ENCODE measurements at regions of chr9 and their contacts with region 1.

Region 1: GRCh38 chr9:68577774-68578591 is 37.3 kb upstream of the TMEM252 start:
- DNase-seq: peak; percentile 43
- ATAC-seq: peak; percentile 92
- H3K4me3 ChIP-seq: peak overlapping the region in 1 of 5 experiments; percentile 24
- H3K4me3 Mint-ChIP-seq: peak overlapping the region; percentile 40
- H3K27ac ChIP-seq: no peak overlapping the region
- H3K27ac Mint-ChIP-seq: no peak overlapping the region
- H3K4me1 ChIP-seq: peaks cover 25% of the 10 kb centered on the region in 2 donors
- H3K4me1 Mint-ChIP-seq: peaks cover 29% of the 10 kb centered on the region
- H3K27me3 ChIP-seq: no peaks in the 10 kb centered on the region
- H3K27me3 Mint-ChIP-seq: no peaks in the 10 kb centered on the region
- CTCF ChIP-seq: no peak

Region 2: DNA sequence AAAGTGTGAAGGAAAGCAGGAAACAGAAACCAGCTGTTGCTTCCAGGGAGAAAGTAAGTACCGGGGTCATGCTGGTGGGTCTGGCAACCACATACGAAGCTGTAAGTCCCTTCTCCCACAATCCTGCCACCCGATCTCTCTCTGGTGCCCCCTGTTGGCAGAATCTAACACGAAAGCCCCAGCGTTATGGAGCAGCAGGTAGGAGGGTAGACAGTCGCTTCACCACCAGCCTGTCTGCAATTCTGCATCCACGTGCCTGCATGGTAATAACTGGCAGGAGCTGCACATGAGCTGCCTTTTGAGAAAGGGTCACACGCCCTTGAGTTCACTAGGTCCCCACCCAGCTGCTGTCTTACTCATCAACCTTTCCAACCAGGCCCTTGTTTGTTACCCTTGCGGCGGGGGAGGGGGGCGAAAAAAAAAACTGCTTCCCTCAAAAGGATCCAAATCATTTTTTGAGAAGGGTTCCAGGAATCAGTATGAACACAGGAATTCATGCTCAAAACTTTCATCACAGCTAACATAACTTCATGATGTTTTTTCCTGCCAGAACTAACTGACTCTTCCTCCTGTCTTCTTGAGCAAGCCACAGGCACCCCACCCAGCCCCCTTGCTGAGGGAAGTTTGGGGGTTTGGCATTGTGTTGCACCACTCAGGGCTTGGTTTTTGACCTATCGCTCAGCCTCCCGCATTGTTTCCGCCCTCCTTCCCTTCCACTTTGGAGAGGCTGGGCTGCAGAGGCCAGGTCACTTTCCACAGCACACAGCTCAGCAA is 17.7 kb before region 1 on chr9:
- CTCF ChIA-PET with region 1: interaction called, 11 read pairs
- POLR2A ChIA-PET with region 1: no interaction called
- intact Hi-C with region 1: no loop called
- DNase-seq: peak; percentile 75
- ATAC-seq: peak; percentile 76
- H3K4me3 ChIP-seq: no peak overlapping the region
- H3K4me3 Mint-ChIP-seq: peak overlapping the region; percentile 74
- H3K27ac ChIP-seq: no peak overlapping the region
- H3K27ac Mint-ChIP-seq: no peak overlapping the region
- H3K4me1 ChIP-seq: peaks cover 13% of the 10 kb centered on the region in 2 donors
- H3K4me1 Mint-ChIP-seq: peaks cover 18% of the 10 kb centered on the region
- H3K27me3 ChIP-seq: peaks cover 0 to 3% (median 0%) of the 10 kb centered on the region in 4 experiments
- H3K27me3 Mint-ChIP-seq: peaks cover 10% of the 10 kb centered on the region
- CTCF ChIP-seq: peak; percentile 71

Region 3: DNA sequence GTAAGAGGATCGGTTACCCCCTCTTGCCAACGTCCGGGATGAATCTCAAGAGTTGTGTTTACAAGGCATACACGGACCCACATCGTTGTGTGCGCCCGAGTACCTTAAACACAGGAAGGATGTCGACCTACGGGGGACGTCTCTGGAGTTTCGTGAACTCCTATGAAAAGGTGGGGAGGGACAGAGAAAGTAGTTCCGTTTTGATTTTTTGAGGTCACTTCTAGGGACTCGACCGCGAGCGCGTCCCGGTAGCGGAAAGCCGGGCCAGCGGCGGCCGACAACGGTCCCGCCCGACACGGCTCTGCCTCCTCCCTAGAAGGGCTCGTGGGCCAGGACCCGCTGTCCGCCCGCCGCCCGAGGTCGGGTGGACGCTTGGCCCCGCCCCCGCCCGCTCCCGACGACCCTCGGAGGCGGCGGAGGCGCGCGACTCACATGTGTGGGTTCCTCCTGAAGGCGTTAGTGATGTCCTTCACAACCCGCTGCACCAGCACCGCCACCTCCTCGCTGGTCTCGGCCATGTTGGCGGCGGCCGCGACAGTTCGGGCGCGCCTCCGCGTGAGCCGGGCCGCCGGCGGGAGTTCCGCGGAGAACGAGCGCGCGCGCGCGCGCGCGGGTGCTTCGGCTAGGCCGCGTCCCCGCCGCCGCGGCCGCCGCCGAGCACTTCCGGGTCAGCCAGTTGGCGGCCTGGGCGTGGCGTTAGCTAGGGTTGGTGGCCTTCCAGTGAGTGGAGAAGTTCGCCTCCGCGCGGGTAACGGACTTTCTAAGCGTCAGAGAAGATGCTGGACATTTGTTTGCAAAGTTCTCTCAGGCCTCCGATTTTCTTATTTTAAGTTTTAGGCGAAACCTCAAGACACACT is 1181.7 kb after region 1 on chr9 and contains the start of gene PTAR1:
- CTCF ChIA-PET with region 1: no interaction called
- POLR2A ChIA-PET with region 1: no interaction called
- intact Hi-C with region 1: loop called (anchors 5 kb)
- DNase-seq: peak; percentile 95
- ATAC-seq: peak; percentile 86
- H3K4me3 ChIP-seq: peak within 1 kb of the TSS; percentile 84 to 90 (median 89)
- H3K4me3 Mint-ChIP-seq: peak within 1 kb of the TSS; percentile 97
- H3K27ac ChIP-seq: peak within 1 kb of the TSS; percentile 77 to 94
- H3K27ac Mint-ChIP-seq: peak within 1 kb of the TSS; percentile 97
- H3K4me1 ChIP-seq: peaks cover 12 to 13% of the 10 kb centered on the region in 2 donors
- H3K4me1 Mint-ChIP-seq: peaks cover 26% of the 10 kb centered on the region
- H3K27me3 ChIP-seq: no peaks in the 10 kb centered on the region
- H3K27me3 Mint-ChIP-seq: no peaks in the 10 kb centered on the region
- CTCF ChIP-seq: no peak
- total RNA-seq, gene PTAR1: 72.1 and 82.7 TPM in 2 replicates

Measured in B cell (primary cell).